WTC11 (cell line): ENCODE measurements at regions of chr20 and their contacts with region 1.

Region 1: GRCh38 chr20:62368976-62369814 is 2.1 kb upstream of the LAMA5 start:
- DNase-seq: peak; percentile 78
- ATAC-seq: peak; percentile 21
- H3K4me3 Mint-ChIP-seq: peak overlapping the region; percentile 68
- H3K27ac Mint-ChIP-seq: peak overlapping the region; percentile 59; the same call in 1 of the 2 replicates
- H3K4me1 Mint-ChIP-seq: peaks cover 30% of the 10 kb centered on the region
- H3K27me3 Mint-ChIP-seq: no peaks in the 10 kb centered on the region; the same call in 1 of the 2 replicates
- CTCF ChIP-seq: peak; percentile 47

Region 2: DNA sequence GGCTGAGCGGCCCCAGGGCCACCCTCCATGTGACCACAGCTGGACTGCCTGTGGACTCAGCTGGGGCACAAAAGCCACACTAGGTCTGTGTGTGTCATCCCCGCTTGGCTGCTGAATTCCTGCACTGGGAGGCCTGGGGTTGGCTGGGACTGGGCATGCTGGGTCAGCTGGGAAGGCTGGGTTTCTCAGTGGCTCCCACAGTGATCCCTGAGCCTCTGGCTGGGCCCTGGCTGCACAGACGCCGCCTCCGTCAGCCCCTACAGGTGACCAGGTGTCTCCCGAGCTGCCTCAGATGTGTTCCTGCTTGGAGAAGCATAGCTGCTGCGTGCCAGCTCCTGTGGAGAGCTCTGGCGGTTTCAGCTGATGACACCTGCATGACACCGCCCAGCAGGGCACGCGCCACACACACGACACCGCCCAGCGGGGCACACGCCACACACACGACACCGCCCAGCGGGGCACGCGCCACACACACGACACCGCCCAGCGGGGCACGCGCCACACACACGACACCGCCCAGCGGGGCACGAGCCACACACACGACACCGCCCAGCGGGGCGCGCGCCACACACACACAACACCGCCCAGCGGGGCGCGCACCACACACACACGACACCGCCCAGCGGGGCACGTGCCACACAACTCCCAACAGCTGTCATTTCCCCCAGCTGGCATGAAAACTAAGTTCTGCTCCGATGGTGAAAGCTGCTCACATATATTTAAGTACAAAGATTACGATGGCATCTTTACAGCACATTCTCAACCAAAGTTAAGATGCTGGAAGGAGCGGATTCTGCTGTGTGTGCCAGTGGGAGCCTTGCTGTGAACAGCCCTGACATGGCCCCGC is 392.3 kb before region 1 on chr20:
- CTCF ChIA-PET with region 1: no interaction called
- POLR2A ChIA-PET with region 1: no interaction called
- DNase-seq: no peak
- ATAC-seq: peak; percentile 13; the same call in 1 of the 2 replicates
- H3K4me3 Mint-ChIP-seq: no peak overlapping the region
- H3K27ac Mint-ChIP-seq: no peak overlapping the region
- H3K4me1 Mint-ChIP-seq: peaks cover 2% of the 10 kb centered on the region; the same call in 1 of the 2 replicates
- H3K27me3 Mint-ChIP-seq: no peaks in the 10 kb centered on the region
- CTCF ChIP-seq: no peak

Region 3: GRCh38 chr20:62302341-62303058 is 66.7 kb before region 1 on chr20 and contains the start of gene ADRM1:
- CTCF ChIA-PET with region 1: interaction called, 28 read pairs
- POLR2A ChIA-PET with region 1: interaction called, 6 read pairs
- DNase-seq: peak; percentile 98
- ATAC-seq: peak; percentile 80
- H3K4me3 Mint-ChIP-seq: peak within 1 kb of the TSS; percentile 86
- H3K27ac Mint-ChIP-seq: peak within 1 kb of the TSS; percentile 96
- H3K4me1 Mint-ChIP-seq: peaks cover 18% of the 10 kb centered on the region
- H3K27me3 Mint-ChIP-seq: no peaks in the 10 kb centered on the region
- CTCF ChIP-seq: peak; percentile 73
- total RNA-seq, gene ADRM1: 146 to 160 TPM (median 147 TPM) in 3 replicates

Region 4: DNA sequence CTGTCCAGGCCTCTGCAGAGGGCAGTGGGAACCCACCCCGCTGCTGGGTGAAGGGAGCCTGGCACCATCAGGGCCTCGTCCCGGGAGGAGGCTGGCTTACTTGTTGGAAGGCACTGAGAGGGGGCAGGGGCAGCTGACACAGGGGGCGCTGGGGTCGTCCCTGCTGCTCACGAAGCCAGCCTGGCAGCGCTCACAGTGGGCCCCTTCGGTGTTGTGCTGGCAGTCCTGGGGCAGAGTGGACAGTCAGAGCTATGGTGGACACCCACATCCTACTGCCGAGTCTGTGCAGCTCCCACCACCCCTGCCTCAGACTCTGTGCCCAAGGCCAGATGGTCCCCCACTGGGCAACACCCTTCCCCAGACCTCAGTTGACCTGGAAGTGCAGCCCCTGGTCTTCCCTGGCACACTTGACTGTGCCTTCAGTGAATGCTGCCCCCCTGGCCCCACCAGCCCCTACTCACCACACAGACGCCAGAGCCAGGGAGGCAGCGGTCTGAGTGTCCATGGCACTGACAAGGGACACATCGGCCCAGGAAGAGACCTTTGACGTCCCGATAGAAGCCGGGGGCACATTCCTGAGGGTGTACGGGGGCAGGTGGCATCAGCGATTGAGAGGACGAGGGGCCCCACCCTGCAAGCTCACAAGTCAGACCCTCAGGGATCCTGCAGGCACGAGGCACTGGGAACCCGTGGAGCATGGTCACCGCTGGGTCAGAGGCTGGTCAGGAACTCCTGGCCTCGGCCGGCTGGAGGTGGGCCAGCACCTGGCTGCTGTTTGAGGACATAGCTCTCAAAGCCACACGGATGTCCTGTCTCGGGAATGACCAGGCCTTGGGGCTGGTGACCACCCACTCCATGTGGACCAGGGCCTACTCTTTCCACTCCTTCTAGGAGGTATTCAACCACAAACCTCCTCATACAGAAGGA is 45.0 kb before region 1 on chr20:
- CTCF ChIA-PET with region 1: interaction called, 12 read pairs
- POLR2A ChIA-PET with region 1: interaction called, 3 read pairs
- DNase-seq: no peak
- ATAC-seq: no peak
- H3K4me3 Mint-ChIP-seq: no peak overlapping the region
- H3K27ac Mint-ChIP-seq: no peak overlapping the region
- H3K4me1 Mint-ChIP-seq: no peaks in the 10 kb centered on the region
- H3K27me3 Mint-ChIP-seq: no peaks in the 10 kb centered on the region
- CTCF ChIP-seq: no peak

Region 5: GRCh38 chr20:62357187-62357667 is 12.0 kb before region 1 on chr20:
- CTCF ChIA-PET with region 1: interaction called, 8 read pairs
- POLR2A ChIA-PET with region 1: interaction called, 21 read pairs
- DNase-seq: no peak
- ATAC-seq: no peak
- H3K4me3 Mint-ChIP-seq: no peak overlapping the region
- H3K27ac Mint-ChIP-seq: no peak overlapping the region
- H3K4me1 Mint-ChIP-seq: peaks cover 21% of the 10 kb centered on the region
- H3K27me3 Mint-ChIP-seq: no peaks in the 10 kb centered on the region
- CTCF ChIP-seq: no peak

Region 6: GRCh38 chr20:62636446-62636845 is 267.3 kb after region 1 on chr20:
- CTCF ChIA-PET with region 1: no interaction called
- POLR2A ChIA-PET with region 1: no interaction called
- DNase-seq: no peak
- ATAC-seq: no peak
- H3K4me3 Mint-ChIP-seq: no peak overlapping the region
- H3K27ac Mint-ChIP-seq: no peak overlapping the region
- H3K4me1 Mint-ChIP-seq: peaks cover 12% of the 10 kb centered on the region
- H3K27me3 Mint-ChIP-seq: peaks cover 25% of the 10 kb centered on the region
- CTCF ChIP-seq: no peak